CD8-positive, alpha-beta T cell (primary cell): ENCODE measurements at regions of chr5 and their contacts with region 1.

Region 1: DNA sequence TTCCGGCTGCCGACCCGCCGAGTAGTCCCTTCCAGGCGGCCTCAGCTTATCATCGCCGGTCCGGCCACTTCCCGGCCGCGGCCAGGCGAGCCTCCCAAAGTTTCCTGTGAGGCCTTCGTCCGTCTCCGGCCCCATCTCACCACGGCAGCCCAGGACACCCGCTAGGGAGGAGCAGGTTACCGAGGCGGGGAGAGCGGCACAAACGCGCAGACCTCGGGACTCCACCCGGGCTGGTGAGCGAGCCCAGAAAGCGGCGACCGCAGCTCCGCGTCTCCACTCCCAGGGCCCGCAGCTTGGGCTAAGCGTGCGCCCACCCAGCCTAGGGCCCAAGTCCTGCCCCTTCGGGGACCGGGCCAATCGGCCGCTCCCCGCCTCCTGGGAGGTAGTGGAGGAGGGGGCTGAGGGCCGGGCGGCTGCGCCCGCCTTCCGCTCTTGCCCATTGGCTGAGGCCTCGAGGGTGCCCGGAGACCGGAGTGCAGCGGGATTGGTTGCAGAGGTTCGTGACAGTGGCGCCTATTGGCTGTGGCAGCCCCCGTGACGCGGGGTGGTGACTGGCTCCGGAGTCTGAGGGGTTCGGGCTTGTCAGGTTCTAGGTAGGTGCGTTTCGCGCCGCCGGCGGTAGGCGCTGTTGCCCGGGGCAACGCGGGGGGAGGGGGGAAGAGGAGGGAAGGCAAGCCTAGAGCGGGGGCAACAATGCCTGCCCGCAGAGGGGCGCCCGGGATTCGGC is 867 bp downstream of the FER start:
- DNase-seq: peak; percentile 95 to 99 (median 98)
- ATAC-seq: peak; percentile 90
- H3K4me3 ChIP-seq: peak overlapping the region; percentile 86 to 98
- H3K4me3 Mint-ChIP-seq: peak overlapping the region; percentile 87
- H3K27ac ChIP-seq: peak overlapping the region; percentile 82 to 88
- H3K27ac Mint-ChIP-seq: peak overlapping the region; percentile 96
- H3K4me1 ChIP-seq: no peaks in the 10 kb centered on the region
- H3K4me1 Mint-ChIP-seq: peaks cover 12% of the 10 kb centered on the region
- H3K27me3 ChIP-seq: no peaks in the 10 kb centered on the region
- H3K27me3 Mint-ChIP-seq: peaks cover 2% of the 10 kb centered on the region
- CTCF ChIP-seq: no peak

Region 2: GRCh38 chr5:108381954-108382783 is 366.4 kb before region 1 on chr5 and contains the start of gene FBXL17:
- CTCF ChIA-PET with region 1: no interaction called
- POLR2A ChIA-PET with region 1: no interaction called
- intact Hi-C with region 1: loop called (anchors 1 kb)
- DNase-seq: peak; percentile 83 to 97 (median 90)
- ATAC-seq: peak; percentile 75
- H3K4me3 ChIP-seq: peak within 1 kb of the TSS; percentile 59 to 63
- H3K4me3 Mint-ChIP-seq: peak within 1 kb of the TSS; percentile 94
- H3K27ac ChIP-seq: peak within 1 kb of the TSS; percentile 84 to 86
- H3K27ac Mint-ChIP-seq: peak within 1 kb of the TSS; percentile 99
- H3K4me1 ChIP-seq: peaks cover 11% of the 10 kb centered on the region
- H3K4me1 Mint-ChIP-seq: peaks cover 36% of the 10 kb centered on the region
- H3K27me3 ChIP-seq: no peaks in the 10 kb centered on the region
- H3K27me3 Mint-ChIP-seq: no peaks in the 10 kb centered on the region
- CTCF ChIP-seq: no peak
- total RNA-seq, gene FBXL17: 13.5 to 17.9 TPM

Region 3: GRCh38 chr5:110623874-110624273 is 1875.3 kb after region 1 on chr5:
- CTCF ChIA-PET with region 1: no interaction called
- POLR2A ChIA-PET with region 1: no interaction called
- intact Hi-C with region 1: no loop called
- DNase-seq: no peak
- ATAC-seq: no peak
- H3K4me3 ChIP-seq: no peak overlapping the region
- H3K4me3 Mint-ChIP-seq: no peak overlapping the region
- H3K27ac ChIP-seq: no peak overlapping the region
- H3K27ac Mint-ChIP-seq: no peak overlapping the region
- H3K4me1 ChIP-seq: no peaks in the 10 kb centered on the region
- H3K4me1 Mint-ChIP-seq: no peaks in the 10 kb centered on the region
- H3K27me3 ChIP-seq: peaks cover 0 to 2% of the 10 kb centered on the region in 2 experiments
- H3K27me3 Mint-ChIP-seq: peaks cover 3% of the 10 kb centered on the region
- CTCF ChIP-seq: no peak